ENCODE measurements at regions of chr5 and their contacts with region 1.

Region 1: GRCh38 chr5:168047043-168047668 is 244.3 kb upstream of the WWC1 start:
- DNase-seq: peak; percentile 71
- H3K4me3 Mint-ChIP-seq: no peak overlapping the region
- H3K27ac Mint-ChIP-seq: no peak overlapping the region
- H3K4me1 Mint-ChIP-seq: peaks cover 12% of the 10 kb centered on the region
- H3K27me3 Mint-ChIP-seq: peaks cover 90% of the 10 kb centered on the region
- CTCF ChIP-seq: peak; percentile 64

Region 2: GRCh38 chr5:167261309-167262100 is 785.7 kb before region 1 on chr5:
- CTCF ChIA-PET with region 1: no interaction called
- intact Hi-C with region 1: loop called (anchors 10 kb)
- DNase-seq: no peak
- H3K4me3 Mint-ChIP-seq: no peak overlapping the region
- H3K27ac Mint-ChIP-seq: no peak overlapping the region
- H3K4me1 Mint-ChIP-seq: no peaks in the 10 kb centered on the region
- H3K27me3 Mint-ChIP-seq: no peaks in the 10 kb centered on the region
- CTCF ChIP-seq: peak; percentile 26

Region 3: DNA sequence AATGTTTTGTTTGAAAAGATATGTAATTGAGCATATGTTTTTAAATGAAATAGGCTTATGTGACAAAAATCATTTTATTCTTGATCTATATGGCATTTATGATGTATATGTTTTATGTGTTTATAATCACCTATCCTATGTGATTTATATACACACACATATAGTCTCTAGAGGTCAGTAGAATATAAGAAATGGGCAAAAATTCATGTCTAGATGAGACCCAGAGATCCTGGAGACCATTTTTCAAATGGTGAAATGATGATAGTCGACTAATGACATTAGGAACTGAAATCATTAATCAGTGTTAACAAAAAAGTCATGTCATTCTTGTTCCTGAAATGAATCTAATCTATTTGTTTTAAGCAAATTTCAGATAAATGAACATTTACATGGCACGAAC is 464.9 kb before region 1 on chr5:
- CTCF ChIA-PET with region 1: interaction called, 5 read pairs
- intact Hi-C with region 1: loop called (anchors 1 kb)
- DNase-seq: no peak
- H3K4me3 Mint-ChIP-seq: no peak overlapping the region
- H3K27ac Mint-ChIP-seq: no peak overlapping the region
- H3K4me1 Mint-ChIP-seq: no peaks in the 10 kb centered on the region
- H3K27me3 Mint-ChIP-seq: peaks cover 33% of the 10 kb centered on the region
- CTCF ChIP-seq: no peak

Region 4: DNA sequence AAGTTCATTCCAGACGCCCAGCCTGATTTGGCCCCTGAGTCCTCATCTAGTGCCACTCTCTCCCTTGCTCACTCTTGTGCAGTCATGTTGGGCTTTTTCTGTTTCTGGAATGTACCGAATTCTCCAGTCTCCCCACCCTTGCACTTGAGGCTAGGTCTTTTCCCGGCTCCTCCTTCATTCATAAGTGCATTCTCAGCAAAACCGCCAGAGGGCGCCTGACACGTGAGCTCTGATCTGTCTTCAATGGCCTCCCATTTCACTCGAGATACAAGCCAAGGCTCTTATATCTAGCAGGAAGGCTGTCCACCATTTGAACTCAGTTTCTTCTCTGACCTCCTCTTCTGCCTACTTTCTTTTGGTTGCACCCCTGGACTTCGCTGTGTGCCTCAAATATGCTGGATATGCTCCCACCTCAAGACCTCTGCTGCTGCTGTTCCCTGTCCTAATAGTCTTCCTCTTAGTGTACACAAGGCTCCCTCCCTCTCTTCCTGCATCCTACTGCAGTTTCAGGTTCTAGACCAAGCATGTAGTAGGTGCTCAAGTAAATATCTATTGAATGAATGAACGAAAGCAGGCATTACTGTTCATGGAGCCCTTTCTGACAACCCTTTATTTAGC is 323.8 kb before region 1 on chr5:
- CTCF ChIA-PET with region 1: interaction called, 10 read pairs
- intact Hi-C with region 1: loop called (anchors 1 kb)
- DNase-seq: peak; percentile 82
- H3K4me3 Mint-ChIP-seq: no peak overlapping the region
- H3K27ac Mint-ChIP-seq: peak overlapping the region; percentile 45
- H3K4me1 Mint-ChIP-seq: peaks cover 11% of the 10 kb centered on the region
- H3K27me3 Mint-ChIP-seq: no peaks in the 10 kb centered on the region
- CTCF ChIP-seq: peak; percentile 94

Region 5: DNA sequence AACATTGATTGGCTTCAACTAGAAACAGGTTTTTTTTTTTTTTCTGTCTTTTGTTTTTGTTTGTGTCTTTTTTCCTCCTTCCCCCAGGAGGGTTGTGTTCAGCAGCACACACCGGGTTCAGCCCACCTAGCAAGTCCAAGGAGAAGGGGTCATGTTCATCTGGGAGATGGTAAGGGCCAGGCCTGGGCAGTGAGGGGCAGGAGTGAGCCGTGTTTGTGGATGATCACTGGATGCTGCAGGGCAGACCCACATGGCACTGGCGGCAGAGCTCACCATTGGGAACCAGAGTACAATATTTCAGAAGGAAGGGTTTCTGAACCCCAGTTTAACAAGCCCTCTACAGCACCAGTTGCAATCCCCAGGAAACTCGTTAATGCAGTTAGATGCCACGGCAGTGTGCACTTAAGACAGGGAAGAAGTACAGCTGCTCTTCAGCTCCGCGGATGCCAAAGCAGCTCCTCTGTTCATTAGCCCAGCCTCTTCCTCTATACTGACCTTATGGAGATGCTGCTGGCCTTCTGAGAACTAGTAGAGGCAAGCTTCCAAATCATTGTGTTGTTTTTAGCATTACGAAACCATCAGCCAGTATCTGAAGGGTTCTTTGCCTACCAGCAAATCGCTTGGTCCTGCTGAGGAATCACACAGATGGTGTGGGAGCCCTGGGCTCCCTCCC is 263.9 kb before region 1 on chr5:
- CTCF ChIA-PET with region 1: no interaction called
- intact Hi-C with region 1: no loop called
- DNase-seq: no peak
- H3K4me3 Mint-ChIP-seq: no peak overlapping the region
- H3K27ac Mint-ChIP-seq: no peak overlapping the region
- H3K4me1 Mint-ChIP-seq: no peaks in the 10 kb centered on the region
- H3K27me3 Mint-ChIP-seq: peaks cover 47% of the 10 kb centered on the region
- CTCF ChIP-seq: no peak

Region 6: GRCh38 chr5:167797933-167798332 is 249.2 kb before region 1 on chr5:
- CTCF ChIA-PET with region 1: no interaction called
- intact Hi-C with region 1: no loop called
- DNase-seq: no peak
- H3K4me3 Mint-ChIP-seq: no peak overlapping the region
- H3K27ac Mint-ChIP-seq: no peak overlapping the region
- H3K4me1 Mint-ChIP-seq: peaks cover 7% of the 10 kb centered on the region
- H3K27me3 Mint-ChIP-seq: no peaks in the 10 kb centered on the region
- CTCF ChIP-seq: no peak

Region 7: GRCh38 chr5:168006456-168007130 is 40.6 kb before region 1 on chr5:
- CTCF ChIA-PET with region 1: no interaction called
- intact Hi-C with region 1: no loop called
- DNase-seq: no peak
- H3K4me3 Mint-ChIP-seq: no peak overlapping the region
- H3K27ac Mint-ChIP-seq: no peak overlapping the region
- H3K4me1 Mint-ChIP-seq: no peaks in the 10 kb centered on the region
- H3K27me3 Mint-ChIP-seq: peaks cover 86% of the 10 kb centered on the region
- CTCF ChIP-seq: no peak

Measured in Calu3 (cell line).